CD14-positive monocyte (primary cell): ENCODE measurements at regions of chr12 and their contacts with region 1.

Region 1: DNA sequence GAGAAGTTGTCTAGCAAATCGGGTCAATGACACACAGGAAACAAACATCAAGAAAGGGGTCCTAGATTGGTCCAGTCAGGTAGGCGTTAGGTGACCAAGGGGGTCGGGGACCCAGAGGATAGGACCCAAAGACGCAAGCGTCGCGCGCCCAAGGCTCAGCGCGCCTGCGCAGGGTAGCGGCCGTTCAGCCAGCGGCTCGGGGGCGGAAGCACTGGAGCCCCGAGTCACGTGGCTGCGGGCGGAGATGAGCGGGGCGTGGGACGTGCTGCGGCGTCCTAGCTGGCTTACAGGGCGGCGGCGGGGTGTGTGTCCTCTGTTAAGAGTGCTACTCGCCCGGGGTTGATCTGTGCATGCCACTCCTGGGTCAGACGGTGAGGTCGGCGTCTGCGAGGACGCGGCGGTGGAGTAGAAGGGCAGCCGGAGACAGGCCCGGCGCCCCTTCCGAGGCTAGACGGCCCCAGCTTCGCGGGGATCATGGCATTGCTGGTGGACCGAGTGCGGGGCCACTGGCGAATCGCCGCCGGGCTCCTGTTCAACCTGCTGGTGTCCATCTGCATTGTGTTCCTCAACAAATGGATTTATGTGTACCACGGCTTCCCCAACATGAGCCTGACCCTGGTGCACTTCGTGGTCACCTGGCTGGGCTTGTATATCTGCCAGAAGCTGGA is at the start of gene SLC35E3:
- DNase-seq: peak; percentile 86 to 93 (median 87)
- H3K4me3 ChIP-seq: peak within 1 kb of the TSS; percentile 58 to 91 (median 73)
- H3K4me3 Mint-ChIP-seq: peak within 1 kb of the TSS; percentile 98 to 100
- H3K27ac ChIP-seq: peak within 1 kb of the TSS; percentile 43 to 87
- H3K27ac Mint-ChIP-seq: peak within 1 kb of the TSS; percentile 86 to 95 (median 93)
- H3K4me1 ChIP-seq: peaks cover 16 to 37% of the 10 kb centered on the region in 2 donors
- H3K4me1 Mint-ChIP-seq: peaks cover 37% of the 10 kb centered on the region
- H3K27me3 ChIP-seq: no peaks in the 10 kb centered on the region
- H3K27me3 Mint-ChIP-seq: no peaks in the 10 kb centered on the region
- CTCF ChIP-seq: no peak
- polyA plus RNA-seq, gene SLC35E3: 4.3 to 12.4 (median 10.9) TPM

Region 2: DNA sequence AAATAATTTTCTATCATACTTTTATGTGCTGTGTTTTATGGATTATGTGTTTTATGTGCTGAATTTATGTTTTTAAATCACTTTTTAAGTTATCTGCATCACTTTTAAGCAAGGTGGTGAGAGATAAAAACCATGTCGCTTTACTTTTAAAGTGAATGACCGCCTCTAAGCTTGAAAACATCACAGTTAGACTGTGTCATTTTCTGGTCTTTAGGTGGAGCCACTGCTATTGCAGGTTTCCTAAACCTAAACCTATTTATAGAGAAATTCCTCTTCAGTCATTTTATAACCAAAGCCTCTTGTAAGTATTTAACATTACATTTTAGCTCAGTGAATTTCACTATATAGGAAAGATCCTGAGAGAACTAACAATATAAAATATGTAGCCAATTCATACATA is 40.9 kb after region 1 on chr12:
- intact Hi-C with region 1: loop called in 1 of 2 experiments (anchors 5 kb)
- DNase-seq: peak in 1 of 3 donors; percentile 15
- H3K4me3 ChIP-seq: peak overlapping the region in 1 of 3 experiments; percentile 53
- H3K4me3 Mint-ChIP-seq: no peak overlapping the region
- H3K27ac ChIP-seq: peak overlapping the region; percentile 88 to 96
- H3K27ac Mint-ChIP-seq: peak overlapping the region; percentile 96 to 99 (median 97)
- H3K4me1 ChIP-seq: peaks cover 63 to 64% of the 10 kb centered on the region in 2 donors
- H3K4me1 Mint-ChIP-seq: peaks cover 50% of the 10 kb centered on the region
- H3K27me3 ChIP-seq: no peaks in the 10 kb centered on the region
- H3K27me3 Mint-ChIP-seq: no peaks in the 10 kb centered on the region
- CTCF ChIP-seq: no peak

Region 3: GRCh38 chr12:68807576-68808387 is 61.7 kb after region 1 on chr12 and contains the start of gene MDM2:
- intact Hi-C with region 1: loop called in 1 of 2 experiments (anchors 2 kb)
- DNase-seq: peak; percentile 89 to 95 (median 95)
- H3K4me3 ChIP-seq: peak within 1 kb of the TSS; percentile 87 to 98 (median 97)
- H3K4me3 Mint-ChIP-seq: peak within 1 kb of the TSS; percentile 95 to 96
- H3K27ac ChIP-seq: peak within 1 kb of the TSS; percentile 98
- H3K27ac Mint-ChIP-seq: peak within 1 kb of the TSS; percentile 95 to 98 (median 98)
- H3K4me1 ChIP-seq: peaks cover 14 to 22% of the 10 kb centered on the region in 2 donors
- H3K4me1 Mint-ChIP-seq: peaks cover 28% of the 10 kb centered on the region
- H3K27me3 ChIP-seq: no peaks in the 10 kb centered on the region
- H3K27me3 Mint-ChIP-seq: peaks cover 0 to 4% (median 0%) of the 10 kb centered on the region in 3 donors
- CTCF ChIP-seq: peak; percentile 77
- polyA plus RNA-seq, gene MDM2: 16.2 to 39.9 (median 27.6) TPM

Region 4: GRCh38 chr12:69254046-69254445 is 508.0 kb after region 1 on chr12:
- intact Hi-C with region 1: no loop called
- DNase-seq: peak; percentile 42 to 60 (median 51)
- H3K4me3 ChIP-seq: no peak overlapping the region
- H3K4me3 Mint-ChIP-seq: no peak overlapping the region
- H3K27ac ChIP-seq: peak overlapping the region in 1 of 2 donors; percentile 34
- H3K27ac Mint-ChIP-seq: peak overlapping the region in 6 of 7 donors; percentile 18 to 77 (median 58)
- H3K4me1 ChIP-seq: peaks cover 16 to 17% of the 10 kb centered on the region in 2 donors
- H3K4me1 Mint-ChIP-seq: peaks cover 42% of the 10 kb centered on the region
- H3K27me3 ChIP-seq: no peaks in the 10 kb centered on the region
- H3K27me3 Mint-ChIP-seq: no peaks in the 10 kb centered on the region
- CTCF ChIP-seq: peak; percentile 85